Calu3 (cell line): ENCODE measurements at regions of chr3 and their contacts with region 1.

Region 1: DNA sequence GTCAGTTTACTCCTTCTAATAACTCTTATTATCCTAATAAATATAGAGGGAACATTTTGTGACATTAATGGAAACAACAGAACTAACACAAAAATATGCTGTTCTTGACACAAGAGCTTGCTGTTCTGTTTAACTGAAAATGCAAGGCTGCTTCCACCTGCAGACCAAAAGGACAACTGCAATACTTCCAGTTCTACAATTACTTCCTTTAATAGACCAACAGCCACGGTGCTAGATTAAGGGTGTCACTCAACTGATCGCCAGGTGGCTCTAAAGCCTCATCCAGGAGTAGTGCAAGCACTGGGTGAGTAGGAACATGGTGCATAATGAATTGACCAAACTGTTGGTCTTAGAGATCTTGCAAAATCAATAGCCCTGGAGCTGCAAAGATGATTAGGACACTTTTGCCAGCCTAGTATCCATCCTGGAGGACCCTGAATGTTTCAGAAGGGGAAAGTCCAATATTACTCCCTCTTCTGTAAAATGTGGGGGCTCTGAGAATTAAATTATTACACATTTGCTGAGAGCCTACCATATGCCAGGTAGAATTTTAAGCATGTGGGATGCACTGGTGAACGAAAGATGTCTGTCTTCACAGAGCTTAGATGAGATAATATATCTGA is 3.6 kb upstream of the CLDN16 start:
- DNase-seq: peak; percentile 89
- H3K4me3 Mint-ChIP-seq: no peak overlapping the region
- H3K27ac Mint-ChIP-seq: peak overlapping the region; percentile 34
- H3K4me1 Mint-ChIP-seq: peaks cover 64% of the 10 kb centered on the region
- H3K27me3 Mint-ChIP-seq: no peaks in the 10 kb centered on the region
- CTCF ChIP-seq: peak; percentile 91

Region 2: GRCh38 chr3:189961525-189962161 is 422.7 kb before region 1 on chr3:
- CTCF ChIA-PET with region 1: interaction called, 19 read pairs
- intact Hi-C with region 1: loop called (anchors 1 kb)
- DNase-seq: peak; percentile 91
- H3K4me3 Mint-ChIP-seq: no peak overlapping the region
- H3K27ac Mint-ChIP-seq: no peak overlapping the region
- H3K4me1 Mint-ChIP-seq: peaks cover 11% of the 10 kb centered on the region
- H3K27me3 Mint-ChIP-seq: no peaks in the 10 kb centered on the region
- CTCF ChIP-seq: peak; percentile 90

Region 3: GRCh38 chr3:190017521-190018288 is 366.6 kb before region 1 on chr3:
- CTCF ChIA-PET with region 1: interaction called, 4 read pairs
- intact Hi-C with region 1: loop called (anchors 2 kb)
- DNase-seq: peak; percentile 61
- H3K4me3 Mint-ChIP-seq: no peak overlapping the region
- H3K27ac Mint-ChIP-seq: no peak overlapping the region
- H3K4me1 Mint-ChIP-seq: peaks cover 30% of the 10 kb centered on the region
- H3K27me3 Mint-ChIP-seq: no peaks in the 10 kb centered on the region
- CTCF ChIP-seq: peak; percentile 31

Region 4: DNA sequence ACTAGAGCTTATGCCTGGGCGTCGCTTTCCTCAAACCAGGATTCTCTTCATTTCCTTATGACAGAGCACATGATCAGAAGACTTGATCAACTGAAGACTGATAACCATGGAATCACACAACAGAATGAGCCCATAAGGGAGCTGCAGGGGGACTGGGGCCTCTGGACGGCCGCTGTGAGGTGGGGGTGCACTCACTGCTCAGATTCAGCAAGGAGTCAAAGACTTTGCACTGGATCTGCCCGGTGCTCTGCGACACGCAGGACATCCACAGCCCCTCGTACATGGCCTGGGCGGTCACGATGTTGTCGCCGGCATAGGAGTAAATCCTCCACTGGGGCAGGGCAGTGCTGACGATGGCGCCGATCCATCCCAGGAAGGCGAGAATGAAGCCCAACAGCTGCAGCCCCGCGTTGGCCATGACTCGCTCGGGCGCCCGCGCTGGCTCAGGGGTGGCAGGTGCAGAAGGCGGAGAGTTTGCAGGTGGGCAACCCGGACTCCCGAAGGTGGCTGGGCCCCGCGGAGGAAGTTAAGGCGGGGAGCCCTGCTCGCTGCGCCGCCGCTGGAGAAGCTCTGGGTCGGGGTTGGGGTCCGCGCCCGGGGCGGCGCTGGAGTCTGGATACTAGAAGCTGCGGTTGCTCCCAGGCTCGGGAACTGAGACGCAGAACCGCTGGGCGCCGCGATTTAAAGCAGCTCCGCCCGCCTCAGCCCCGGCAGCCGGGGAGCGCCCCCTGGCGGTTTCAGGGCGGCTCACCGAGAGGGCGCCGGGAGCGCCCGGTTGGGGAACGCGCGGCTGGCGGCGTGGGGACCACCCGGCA is 62.4 kb before region 1 on chr3 and contains the start of gene CLDN1:
- CTCF ChIA-PET with region 1: interaction called, 71 read pairs
- intact Hi-C with region 1: loop called (anchors 1 kb)
- DNase-seq: peak; percentile 98
- H3K4me3 Mint-ChIP-seq: peak within 1 kb of the TSS; percentile 81
- H3K27ac Mint-ChIP-seq: peak within 1 kb of the TSS; percentile 89
- H3K4me1 Mint-ChIP-seq: peaks cover 45% of the 10 kb centered on the region
- H3K27me3 Mint-ChIP-seq: no peaks in the 10 kb centered on the region
- CTCF ChIP-seq: peak; percentile 99
- total RNA-seq, gene CLDN1: 204 and 253 TPM in 2 replicates

Region 5: DNA sequence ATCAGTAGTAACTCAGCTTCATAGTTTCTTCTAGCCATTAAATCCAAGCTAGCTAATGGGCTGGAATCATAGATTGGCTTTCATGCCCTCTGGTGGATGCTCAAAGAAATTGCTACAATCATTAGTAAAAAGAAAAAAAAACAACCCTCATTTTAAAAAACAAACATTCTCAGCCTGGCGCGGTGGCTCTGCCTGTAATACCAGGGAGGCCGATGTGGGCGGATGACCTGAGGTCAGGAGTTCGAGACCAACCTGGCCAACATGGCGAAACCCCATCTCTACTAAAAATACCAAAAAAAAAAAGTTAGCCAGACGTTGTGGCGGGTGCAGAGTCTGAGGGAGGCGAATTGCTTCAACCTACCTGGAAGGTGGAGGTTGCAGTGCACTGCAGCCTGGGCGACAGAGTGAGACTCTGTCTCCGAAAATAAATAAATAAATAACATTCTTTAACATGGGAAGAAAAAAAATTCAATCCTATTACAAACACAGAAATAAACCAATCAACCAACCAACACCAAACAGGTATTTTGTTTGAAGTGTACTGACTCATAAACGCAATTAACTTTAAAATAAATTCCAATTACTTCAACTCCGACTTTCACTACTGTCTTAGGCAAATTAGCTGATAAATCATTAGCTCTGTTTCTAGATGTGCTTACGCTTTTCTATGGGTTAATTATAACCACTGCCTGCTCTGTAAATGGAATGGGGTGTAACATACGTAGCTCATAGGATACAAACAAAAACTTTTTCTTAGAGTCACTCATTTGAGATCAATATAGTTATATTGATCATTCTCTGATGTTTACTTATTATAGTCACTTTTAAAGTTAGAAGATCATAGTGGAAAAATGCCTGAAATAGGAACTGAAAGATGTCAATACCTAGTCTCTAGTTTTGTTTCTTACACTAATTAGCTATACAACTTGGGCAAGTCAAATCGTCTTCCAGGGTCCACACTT is 40.4 kb after region 1 on chr3:
- CTCF ChIA-PET with region 1: interaction called, 22 read pairs
- intact Hi-C with region 1: loop called (anchors 1 kb)
- DNase-seq: peak; percentile 86
- H3K4me3 Mint-ChIP-seq: peak overlapping the region; percentile 44
- H3K27ac Mint-ChIP-seq: peak overlapping the region; percentile 94
- H3K4me1 Mint-ChIP-seq: peaks cover 12% of the 10 kb centered on the region
- H3K27me3 Mint-ChIP-seq: no peaks in the 10 kb centered on the region
- CTCF ChIP-seq: peak; percentile 69

Region 6: DNA sequence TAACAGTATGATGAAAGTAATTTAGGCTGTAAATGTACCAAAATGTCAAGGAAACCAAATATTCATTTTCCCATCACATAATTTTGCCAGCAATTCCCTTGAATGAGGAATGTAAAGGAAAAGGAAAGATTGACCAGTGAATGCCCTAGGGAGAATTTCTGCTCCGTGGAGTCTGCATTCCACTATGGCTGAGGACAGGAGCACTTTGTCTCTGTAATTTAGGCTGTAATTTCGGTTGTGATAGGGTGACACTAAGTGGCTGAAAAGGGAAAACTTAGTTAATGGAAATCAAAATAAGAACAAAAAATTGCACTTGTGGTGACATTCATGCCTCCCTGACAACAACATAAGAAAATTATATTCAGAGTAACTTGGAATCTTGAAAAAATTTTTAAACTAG is 73.7 kb after region 1 on chr3:
- CTCF ChIA-PET with region 1: interaction called, 7 read pairs
- intact Hi-C with region 1: loop called (anchors 1 kb)
- DNase-seq: peak; percentile 48
- H3K4me3 Mint-ChIP-seq: peak overlapping the region; percentile 60
- H3K27ac Mint-ChIP-seq: peak overlapping the region; percentile 80
- H3K4me1 Mint-ChIP-seq: peaks cover 45% of the 10 kb centered on the region
- H3K27me3 Mint-ChIP-seq: no peaks in the 10 kb centered on the region
- CTCF ChIP-seq: no peak

Region 7: GRCh38 chr3:190631295-190631694 is 246.9 kb after region 1 on chr3:
- CTCF ChIA-PET with region 1: no interaction called
- intact Hi-C with region 1: no loop called
- DNase-seq: no peak
- H3K4me3 Mint-ChIP-seq: no peak overlapping the region
- H3K27ac Mint-ChIP-seq: peak overlapping the region; percentile 33
- H3K4me1 Mint-ChIP-seq: peaks cover 21% of the 10 kb centered on the region
- H3K27me3 Mint-ChIP-seq: no peaks in the 10 kb centered on the region
- CTCF ChIP-seq: no peak

Region 8: DNA sequence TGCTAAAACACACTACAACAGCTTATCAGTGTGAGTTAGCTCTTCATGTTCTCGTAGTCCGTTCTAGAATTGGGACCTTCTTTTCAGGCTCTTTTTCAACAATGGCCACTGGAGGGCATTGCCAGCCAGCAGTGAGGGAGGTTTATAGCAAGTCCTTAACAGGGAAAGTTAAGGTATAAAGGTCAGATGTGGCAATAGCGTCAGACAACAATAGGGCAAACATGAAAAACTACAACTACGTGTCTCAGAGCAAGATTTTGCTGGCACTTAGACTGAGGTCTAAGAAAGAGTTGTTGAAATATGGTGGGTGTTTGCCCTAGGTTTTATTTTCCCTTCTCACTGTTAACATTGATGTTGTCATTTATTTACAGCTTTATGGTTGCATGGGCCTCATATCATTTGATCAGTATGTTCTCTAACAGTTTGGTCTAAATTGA is 316.8 kb after region 1 on chr3:
- CTCF ChIA-PET with region 1: interaction called, 7 read pairs
- intact Hi-C with region 1: loop called (anchors 2 kb)
- DNase-seq: peak; percentile 81
- H3K4me3 Mint-ChIP-seq: no peak overlapping the region
- H3K27ac Mint-ChIP-seq: peak overlapping the region; percentile 33
- H3K4me1 Mint-ChIP-seq: peaks cover 43% of the 10 kb centered on the region
- H3K27me3 Mint-ChIP-seq: no peaks in the 10 kb centered on the region
- CTCF ChIP-seq: peak; percentile 85